K562 (cell line): ENCODE measurements at regions of chr1 and their contacts with region 1.

Region 1: DNA sequence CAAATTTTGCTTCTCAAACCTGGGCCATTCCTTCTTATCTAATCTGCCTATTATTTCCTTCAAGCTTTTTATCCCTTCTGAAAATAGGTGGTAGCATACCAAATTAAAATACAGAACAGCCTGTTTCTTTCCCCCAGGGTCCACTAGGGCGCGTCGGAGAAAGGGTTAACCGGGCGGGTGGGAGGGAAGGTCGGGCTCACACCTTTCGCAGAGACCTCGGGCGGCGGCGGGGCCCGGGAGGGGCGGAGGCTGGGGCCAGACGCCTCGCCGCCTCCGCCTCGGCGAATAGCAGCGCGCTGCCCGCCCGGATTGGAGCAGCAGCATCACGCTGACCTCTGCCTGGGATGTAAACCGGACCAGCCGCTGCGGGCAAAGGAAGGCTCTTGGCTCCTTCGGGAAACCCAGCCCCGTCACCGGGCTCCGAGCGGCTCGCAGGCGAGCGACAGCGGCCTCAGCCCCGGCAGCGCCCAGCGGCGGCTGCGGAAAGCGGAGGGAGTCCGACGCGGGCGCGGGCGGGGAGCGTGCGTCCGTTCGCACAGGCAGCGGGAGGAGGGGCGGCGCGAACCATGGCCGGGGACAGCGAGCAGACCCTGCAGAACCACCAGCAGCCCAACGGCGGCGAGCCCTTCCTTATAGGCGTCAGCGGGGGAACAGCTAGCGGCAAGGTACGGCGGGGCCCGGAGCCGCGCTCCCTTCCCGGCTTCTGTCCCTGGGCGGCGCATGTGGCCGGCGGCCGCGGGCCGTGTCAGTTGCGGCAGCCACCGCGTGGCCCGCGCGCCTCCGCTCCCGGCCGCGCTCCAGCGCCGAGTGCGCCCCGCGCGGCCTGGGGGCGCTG is at the start of gene UCK2:
- DNase-seq: peak; percentile 89 to 92 (median 91)
- ATAC-seq: peak; percentile 88
- H3K4me3 ChIP-seq: peak within 1 kb of the TSS; percentile 78
- H3K27ac ChIP-seq: peak within 1 kb of the TSS; percentile 95
- H3K4me1 ChIP-seq: peaks cover 8 to 16% of the 10 kb centered on the region in 2 experiments
- H3K27me3 ChIP-seq: no peaks in the 10 kb centered on the region; a peak in 1 of 5 replicates
- CTCF ChIP-seq: peak; percentile 0 to 33 (median 26); a peak in 3 of 6 replicates
- EP300 ChIP-seq: no peak
- POLR2A ChIP-seq: peak; percentile 77
- RAD21 ChIP-seq: peak in 1 of 2 experiments; percentile 41
- polyA plus RNA-seq, gene UCK2: 84.6 to 86.7 TPM

Region 2: GRCh38 chr1:165637427-165637826 is 190.1 kb before region 1 on chr1:
- CTCF ChIA-PET with region 1: no interaction called
- POLR2A ChIA-PET with region 1: no interaction called
- in situ Hi-C with region 1: no loop called
- intact Hi-C with region 1: no loop called
- DNase-seq: no peak
- ATAC-seq: no peak
- H3K4me3 ChIP-seq: no peak overlapping the region
- H3K27ac ChIP-seq: no peak overlapping the region
- H3K4me1 ChIP-seq: peaks cover 0 to 8% of the 10 kb centered on the region in 2 experiments; a peak in 2 of 5 replicates
- H3K27me3 ChIP-seq: no peaks in the 10 kb centered on the region
- CTCF ChIP-seq: no peak
- EP300 ChIP-seq: no peak
- POLR2A ChIP-seq: no peak
- RAD21 ChIP-seq: no peak

Region 3: DNA sequence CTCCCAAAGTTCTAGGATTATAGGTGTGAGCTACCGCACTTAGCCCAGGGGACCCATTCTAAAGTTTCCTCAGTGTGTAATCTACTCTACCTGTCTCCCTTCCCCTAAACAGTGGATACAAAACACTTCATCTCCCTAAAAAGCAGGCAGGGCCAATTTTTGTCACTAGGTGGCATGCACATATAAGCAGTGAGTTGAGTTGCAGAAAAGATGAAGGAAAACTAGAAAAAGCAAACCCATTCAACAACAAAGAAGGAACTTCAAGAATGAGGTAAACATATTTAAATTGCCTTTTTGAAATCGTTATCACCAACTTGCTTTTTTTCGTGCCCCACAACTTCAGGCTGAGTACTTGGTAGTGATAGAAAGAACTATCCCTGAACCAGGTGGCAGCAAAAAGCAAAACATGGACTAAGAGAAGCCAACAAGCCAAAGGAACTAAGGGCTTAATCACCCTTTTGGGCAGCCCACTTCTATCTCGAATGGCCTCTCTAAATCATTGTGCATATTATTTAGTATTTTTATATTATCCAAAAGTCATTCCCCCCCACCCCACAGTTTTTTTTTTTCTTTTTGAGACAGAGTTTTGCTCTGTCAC is 109.5 kb before region 1 on chr1:
- CTCF ChIA-PET with region 1: no interaction called
- POLR2A ChIA-PET with region 1: interaction called, 4 read pairs
- in situ Hi-C with region 1: no loop called
- intact Hi-C with region 1: loop called (anchors 5 kb)
- DNase-seq: peak; percentile 42 to 77 (median 58)
- ATAC-seq: peak; percentile 91
- H3K4me3 ChIP-seq: no peak overlapping the region
- H3K27ac ChIP-seq: no peak overlapping the region
- H3K4me1 ChIP-seq: no peaks in the 10 kb centered on the region
- H3K27me3 ChIP-seq: no peaks in the 10 kb centered on the region; a peak in 2 of 5 replicates
- CTCF ChIP-seq: peak; percentile 83 to 97 (median 87)
- EP300 ChIP-seq: no peak
- POLR2A ChIP-seq: no peak
- RAD21 ChIP-seq: peak; percentile 97 to 99

Region 4: GRCh38 chr1:165815725-165816124 is 11.8 kb before region 1 on chr1:
- CTCF ChIA-PET with region 1: no interaction called
- POLR2A ChIA-PET with region 1: interaction called, 48 read pairs
- in situ Hi-C with region 1: no loop called
- intact Hi-C with region 1: no loop called
- DNase-seq: peak in 3 of 4 experiments; percentile 30 to 51 (median 34)
- ATAC-seq: peak; percentile 37
- H3K4me3 ChIP-seq: no peak overlapping the region
- H3K27ac ChIP-seq: no peak overlapping the region
- H3K4me1 ChIP-seq: peaks cover 16 to 19% of the 10 kb centered on the region in 2 experiments
- H3K27me3 ChIP-seq: no peaks in the 10 kb centered on the region
- CTCF ChIP-seq: no peak
- EP300 ChIP-seq: no peak
- POLR2A ChIP-seq: no peak
- RAD21 ChIP-seq: no peak

Region 5: DNA sequence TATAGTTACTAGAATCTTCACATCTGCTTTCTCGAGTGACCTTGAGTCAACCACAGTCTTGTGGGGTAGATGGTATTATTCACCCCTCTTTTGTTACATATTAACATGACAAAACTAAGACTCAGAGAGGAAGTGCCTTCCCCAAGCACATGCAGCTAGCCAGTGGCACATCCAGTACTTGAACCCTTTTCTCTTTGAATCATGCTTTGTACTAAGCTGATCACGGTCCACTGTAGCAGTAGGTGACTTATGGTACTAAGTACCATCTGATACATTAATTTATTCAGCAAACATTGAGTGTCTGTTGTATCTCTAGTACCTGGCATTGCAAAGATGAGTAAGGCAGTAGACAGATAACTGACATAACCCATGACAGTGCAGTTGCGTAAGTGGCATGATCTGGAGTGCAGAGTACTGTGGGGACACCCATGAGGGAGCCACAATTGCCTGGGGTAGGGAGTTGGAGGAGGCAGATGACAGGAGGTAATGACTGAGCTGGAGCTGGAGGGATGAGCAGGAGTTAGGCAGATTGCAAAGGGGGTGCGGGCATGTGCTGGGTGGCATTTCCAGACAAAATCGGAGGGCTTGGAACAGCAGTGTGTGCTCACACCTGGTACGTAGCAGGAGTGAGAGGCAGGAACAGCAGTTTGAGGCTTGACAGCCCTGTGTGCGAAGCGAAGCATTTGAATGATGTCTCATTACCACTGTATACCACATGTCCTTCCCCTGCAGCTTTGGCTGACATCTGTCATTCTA is 29.7 kb after region 1 on chr1:
- CTCF ChIA-PET with region 1: no interaction called
- POLR2A ChIA-PET with region 1: interaction called, 11 read pairs
- in situ Hi-C with region 1: no loop called
- intact Hi-C with region 1: no loop called
- DNase-seq: no peak
- ATAC-seq: peak; percentile 40
- H3K4me3 ChIP-seq: no peak overlapping the region
- H3K27ac ChIP-seq: no peak overlapping the region
- H3K4me1 ChIP-seq: peaks cover 12 to 39% of the 10 kb centered on the region in 2 experiments
- H3K27me3 ChIP-seq: no peaks in the 10 kb centered on the region
- CTCF ChIP-seq: no peak
- EP300 ChIP-seq: no peak; the same call in 1 of the 2 replicates
- POLR2A ChIP-seq: no peak
- RAD21 ChIP-seq: 0 out of 4 replicates have a peak, but pooled peaks of 1 of the 2 experiments have one; percentile 8

Region 6: DNA sequence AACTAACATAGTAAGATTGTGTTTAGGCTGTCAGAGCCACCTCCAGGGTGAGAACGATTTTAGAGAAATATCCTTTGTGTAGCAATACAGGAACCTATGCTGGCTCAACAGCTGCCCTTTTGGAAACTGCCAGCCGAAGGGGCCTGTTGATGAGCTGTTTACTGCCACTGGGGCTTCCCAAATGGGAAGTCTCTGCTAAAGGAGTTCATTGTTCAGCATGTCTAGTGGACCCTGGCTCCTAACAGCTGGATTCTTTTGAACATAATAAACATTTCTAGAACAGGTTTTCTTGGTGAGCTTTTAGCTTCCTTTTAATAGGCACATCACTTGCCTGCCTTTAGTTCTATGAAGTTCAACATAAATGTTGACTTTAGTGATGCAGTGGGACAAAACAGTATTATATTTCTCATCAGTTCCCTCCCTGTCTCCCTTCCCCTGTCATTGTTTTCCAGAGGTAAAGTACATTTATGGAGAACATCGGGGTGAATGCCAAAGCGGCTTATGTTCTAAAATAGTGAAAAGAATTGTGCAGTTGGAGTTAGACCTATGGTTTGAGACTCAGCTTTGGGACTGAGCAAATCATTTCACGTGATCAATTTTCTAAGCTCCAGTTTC is 57.3 kb after region 1 on chr1:
- CTCF ChIA-PET with region 1: no interaction called
- POLR2A ChIA-PET with region 1: interaction called, 10 read pairs
- in situ Hi-C with region 1: no loop called
- intact Hi-C with region 1: no loop called
- DNase-seq: no peak
- ATAC-seq: no peak
- H3K4me3 ChIP-seq: no peak overlapping the region
- H3K27ac ChIP-seq: no peak overlapping the region
- H3K4me1 ChIP-seq: no peaks in the 10 kb centered on the region; a peak in 1 of 5 replicates
- H3K27me3 ChIP-seq: no peaks in the 10 kb centered on the region
- CTCF ChIP-seq: no peak
- EP300 ChIP-seq: no peak
- POLR2A ChIP-seq: no peak
- RAD21 ChIP-seq: no peak

Region 7: GRCh38 chr1:166080967-166081870 is 253.7 kb after region 1 on chr1:
- CTCF ChIA-PET with region 1: no interaction called
- POLR2A ChIA-PET with region 1: no interaction called
- in situ Hi-C with region 1: no loop called
- intact Hi-C with region 1: no loop called
- DNase-seq: no peak
- ATAC-seq: no peak
- H3K4me3 ChIP-seq: no peak overlapping the region
- H3K27ac ChIP-seq: no peak overlapping the region
- H3K4me1 ChIP-seq: no peaks in the 10 kb centered on the region
- H3K27me3 ChIP-seq: no peaks in the 10 kb centered on the region; a peak in 1 of 5 replicates
- CTCF ChIP-seq: no peak
- EP300 ChIP-seq: no peak
- POLR2A ChIP-seq: no peak
- RAD21 ChIP-seq: no peak

Region 8: DNA sequence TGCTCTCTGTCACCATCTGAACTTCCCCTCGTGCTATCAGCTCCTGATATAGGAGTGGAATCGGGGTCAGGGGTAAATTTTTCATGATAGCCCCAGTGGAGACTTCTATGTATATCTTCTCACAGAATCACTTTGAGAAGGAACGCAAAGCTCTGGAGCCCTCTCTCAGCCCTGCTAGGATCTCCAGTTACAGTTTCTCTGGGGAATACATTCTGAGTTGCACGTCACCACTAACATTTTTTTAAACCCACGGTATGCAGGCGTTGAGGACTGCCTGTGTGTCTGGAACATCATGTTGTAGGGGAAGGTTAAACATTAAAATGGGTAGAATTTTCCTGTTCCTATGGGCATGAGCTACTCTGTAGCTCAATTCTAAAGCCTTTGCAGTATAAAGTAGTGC is 455.7 kb after region 1 on chr1:
- CTCF ChIA-PET with region 1: no interaction called
- POLR2A ChIA-PET with region 1: no interaction called
- in situ Hi-C with region 1: no loop called
- intact Hi-C with region 1: no loop called
- DNase-seq: no peak
- ATAC-seq: no peak
- H3K4me3 ChIP-seq: no peak overlapping the region
- H3K27ac ChIP-seq: no peak overlapping the region
- H3K4me1 ChIP-seq: no peaks in the 10 kb centered on the region
- H3K27me3 ChIP-seq: peaks cover 0 to 3% of the 10 kb centered on the region in 2 experiments; a peak in 1 of 5 replicates
- CTCF ChIP-seq: no peak
- EP300 ChIP-seq: no peak
- POLR2A ChIP-seq: no peak
- RAD21 ChIP-seq: no peak